Activated CD4-positive, alpha-beta T cell treated with anti-CD3 and anti-CD28 coated beads, Interleukin-2, amount 10 ng/mL, durations not matched to agents 7 days and 5 days (primary cell): ENCODE measurements at regions of chr5 and their contacts with region 1.

Region 1: DNA sequence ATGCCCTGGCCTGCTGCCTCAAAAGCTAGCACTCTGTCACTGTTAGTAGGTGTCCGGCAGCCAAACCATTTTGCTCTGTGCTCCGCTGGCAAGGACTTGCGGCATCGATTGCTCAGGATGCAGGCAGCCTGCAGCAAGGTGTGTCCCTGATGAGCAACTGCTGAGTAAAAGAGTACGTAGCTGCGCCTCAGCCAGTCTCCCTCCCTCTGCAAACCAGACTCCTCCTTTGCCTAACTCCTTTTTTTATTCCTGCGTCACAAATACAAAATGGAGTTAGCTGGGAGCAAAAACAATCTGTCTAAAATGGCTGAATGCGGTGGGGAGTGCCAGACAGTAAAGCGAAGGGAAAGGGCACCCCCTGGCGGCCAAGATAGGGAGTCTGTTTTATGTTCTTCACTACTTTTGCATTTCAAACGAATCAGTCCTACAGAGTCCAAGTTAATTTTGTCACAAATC is 61.1 kb downstream of the DIAPH1 start:
- DNase-seq: peak; percentile 77
- H3K4me3 Mint-ChIP-seq: no peak overlapping the region
- H3K27ac Mint-ChIP-seq: peak overlapping the region; percentile 81
- H3K4me1 Mint-ChIP-seq: peaks cover 24% of the 10 kb centered on the region
- H3K27me3 Mint-ChIP-seq: no peaks in the 10 kb centered on the region

Region 2: GRCh38 chr5:141258948-141259347 is 298.8 kb before region 1 on chr5:
- CTCF ChIA-PET with region 1: no interaction called
- POLR2A ChIA-PET with region 1: no interaction called
- DNase-seq: no peak
- H3K4me3 Mint-ChIP-seq: no peak overlapping the region
- H3K27ac Mint-ChIP-seq: no peak overlapping the region
- H3K4me1 Mint-ChIP-seq: no peaks in the 10 kb centered on the region
- H3K27me3 Mint-ChIP-seq: no peaks in the 10 kb centered on the region

Region 3: GRCh38 chr5:141330299-141331080 is 227.2 kb before region 1 on chr5 and contains the start of gene PCDHGA1:
- CTCF ChIA-PET with region 1: no interaction called
- POLR2A ChIA-PET with region 1: no interaction called
- DNase-seq: peak; percentile 37
- H3K4me3 Mint-ChIP-seq: no peak within 1 kb of the TSS
- H3K27ac Mint-ChIP-seq: no peak within 1 kb of the TSS
- H3K4me1 Mint-ChIP-seq: peaks cover 6% of the 10 kb centered on the region
- H3K27me3 Mint-ChIP-seq: peaks cover 43% of the 10 kb centered on the region
- total RNA-seq, gene PCDHGA1: 0.04 to 0.05 TPM

Region 4: DNA sequence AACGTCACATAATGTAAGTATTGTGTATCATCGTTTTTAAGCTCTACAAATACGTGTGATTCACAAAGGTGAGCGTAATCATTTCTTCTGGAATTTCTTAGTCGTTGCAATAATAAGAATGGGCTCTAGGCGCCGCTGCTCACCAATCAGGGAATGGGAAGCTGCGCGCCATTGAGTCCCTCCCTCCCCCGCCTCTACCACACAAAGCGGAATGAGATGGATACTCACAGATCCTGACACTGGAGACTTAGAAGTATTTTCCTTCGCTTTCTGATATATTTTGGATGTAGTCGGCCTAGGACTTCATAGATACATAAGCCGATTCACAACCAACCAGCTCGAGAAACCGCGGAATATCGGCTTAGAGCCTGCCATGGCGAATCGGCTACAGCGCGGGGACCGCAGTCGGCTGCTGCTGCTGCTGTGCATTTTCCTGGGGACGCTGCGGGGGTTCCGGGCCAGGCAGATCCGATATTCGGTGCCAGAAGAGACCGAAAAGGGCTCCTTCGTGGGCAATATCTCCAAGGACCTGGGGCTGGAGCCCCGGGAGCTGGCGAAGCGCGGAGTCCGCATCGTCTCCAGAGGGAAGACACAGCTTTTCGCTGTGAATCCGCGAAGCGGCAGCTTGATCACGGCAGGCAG is 136.7 kb before region 1 on chr5 and contains the start of gene PCDHGA11:
- CTCF ChIA-PET with region 1: interaction called, 10 read pairs
- POLR2A ChIA-PET with region 1: no interaction called
- DNase-seq: peak; percentile 38
- H3K4me3 Mint-ChIP-seq: peak within 1 kb of the TSS; percentile 66
- H3K27ac Mint-ChIP-seq: peak within 1 kb of the TSS; percentile 73
- H3K4me1 Mint-ChIP-seq: peaks cover 8% of the 10 kb centered on the region
- H3K27me3 Mint-ChIP-seq: peaks cover 67% of the 10 kb centered on the region
- total RNA-seq, gene PCDHGA11: not detected

Region 5: DNA sequence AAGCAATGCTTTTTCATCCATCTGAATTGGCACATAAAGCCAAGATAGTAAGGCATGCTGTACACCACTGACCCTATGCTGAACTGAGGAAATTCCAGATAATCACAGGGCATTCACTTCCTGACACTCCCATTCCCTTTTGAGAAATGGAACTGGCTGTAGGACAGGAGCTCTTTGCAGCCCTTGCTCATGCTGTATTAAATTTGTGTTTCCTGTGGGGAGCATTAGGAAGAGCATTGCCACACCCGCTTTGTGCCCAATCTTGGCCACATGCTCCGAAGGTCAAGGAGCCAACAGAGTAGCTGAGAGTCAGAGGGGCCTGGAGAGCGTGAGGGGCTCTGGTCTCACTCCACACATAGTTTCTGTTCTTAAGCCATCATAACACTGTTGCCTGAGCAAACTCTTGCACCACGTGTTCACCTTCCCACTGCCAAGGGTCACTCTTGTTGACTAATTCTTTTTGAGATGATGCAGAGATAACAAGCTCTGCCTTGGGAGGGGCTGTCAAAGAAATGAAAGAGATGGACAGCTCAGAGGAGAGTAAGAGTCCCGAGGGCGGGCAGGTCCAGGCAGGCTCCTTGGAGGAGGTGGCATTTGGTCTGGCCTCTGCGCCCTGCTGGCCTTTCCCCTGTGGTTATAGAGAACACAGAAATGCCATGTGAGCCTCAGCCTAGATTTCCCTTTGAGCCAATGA is 156.1 kb after region 1 on chr5:
- CTCF ChIA-PET with region 1: no interaction called
- POLR2A ChIA-PET with region 1: no interaction called
- DNase-seq: no peak
- H3K4me3 Mint-ChIP-seq: no peak overlapping the region
- H3K27ac Mint-ChIP-seq: no peak overlapping the region
- H3K4me1 Mint-ChIP-seq: no peaks in the 10 kb centered on the region
- H3K27me3 Mint-ChIP-seq: peaks cover 7% of the 10 kb centered on the region